Endothelial cell of umbilical vein (primary cell): ENCODE measurements at regions of chr19 and their contacts with region 1.

Region 1: DNA sequence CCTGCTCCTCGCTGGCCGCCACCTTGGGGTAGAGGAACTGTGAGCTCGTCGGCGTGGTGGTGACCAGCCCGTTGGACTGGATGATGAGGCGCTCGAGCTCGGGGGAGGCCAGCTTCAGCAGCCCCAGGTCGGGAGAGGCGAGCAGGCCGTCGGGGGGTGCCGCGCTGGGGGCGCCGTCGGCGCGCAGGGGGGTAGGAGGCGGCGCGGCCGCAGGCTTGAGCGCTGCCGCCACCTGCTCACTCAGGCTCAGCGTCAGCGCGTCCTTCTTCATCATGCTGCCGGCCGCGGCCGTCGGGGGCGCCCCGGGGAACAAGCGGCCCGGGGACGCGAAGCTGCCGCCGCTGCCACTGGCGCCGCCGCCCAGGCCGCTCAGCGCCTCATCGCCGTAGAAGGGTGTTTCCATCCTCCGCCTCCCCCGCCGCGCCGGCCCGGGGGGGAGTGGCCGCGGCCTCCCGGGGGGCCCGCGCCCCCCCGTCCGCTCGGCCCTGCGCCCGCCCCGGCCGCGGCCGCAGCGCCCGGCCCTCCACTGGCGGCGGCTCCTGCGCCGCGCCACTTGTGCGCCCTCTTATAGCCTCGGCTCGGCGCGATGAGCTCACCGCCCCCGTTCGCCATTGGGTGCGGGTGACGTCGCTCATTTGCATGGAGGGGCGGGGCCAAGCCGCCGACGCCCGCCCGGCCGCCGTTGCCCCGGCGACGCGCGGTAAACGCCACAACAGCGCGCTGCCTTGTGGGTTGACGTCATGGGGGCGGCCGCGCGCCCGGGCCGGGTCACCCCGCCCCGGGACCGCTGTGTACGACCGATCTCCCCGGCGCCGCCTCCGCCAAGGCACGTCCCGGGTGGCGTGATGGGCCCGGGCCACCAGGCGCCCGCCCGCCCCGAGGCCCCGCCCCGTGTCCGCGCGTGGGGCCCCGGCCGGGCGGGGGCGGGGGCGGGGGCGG is at the start of gene JUND:
- DNase-seq: peak; percentile 98
- H3K4me3 ChIP-seq: peak within 1 kb of the TSS; percentile 72 to 92 (median 80)
- H3K27ac ChIP-seq: peak within 1 kb of the TSS; percentile 94
- H3K4me1 ChIP-seq: peaks cover 19% of the 10 kb centered on the region
- H3K27me3 ChIP-seq: no peaks in the 10 kb centered on the region
- CTCF ChIP-seq: no peak
- POLR2A ChIP-seq: peak; percentile 98
- total RNA-seq, gene JUND: 130 and 137 TPM in 2 replicates

Region 2: GRCh38 chr19:17985037-17985818 is 296.1 kb before region 1 on chr19:
- CTCF ChIA-PET with region 1: no interaction called
- POLR2A ChIA-PET with region 1: no interaction called
- dilution Hi-C with region 1: no loop called
- intact Hi-C with region 1: no loop called
- DNase-seq: no peak
- H3K4me3 ChIP-seq: no peak overlapping the region
- H3K27ac ChIP-seq: no peak overlapping the region
- H3K4me1 ChIP-seq: no peaks in the 10 kb centered on the region
- H3K27me3 ChIP-seq: no peaks in the 10 kb centered on the region
- CTCF ChIP-seq: no peak
- POLR2A ChIP-seq: no peak

Region 3: GRCh38 chr19:18203863-18204393 is 77.4 kb before region 1 on chr19 and contains the start of gene RAB3A:
- CTCF ChIA-PET with region 1: interaction called, 13 read pairs
- POLR2A ChIA-PET with region 1: interaction called, 6 read pairs
- dilution Hi-C with region 1: no loop called
- intact Hi-C with region 1: no loop called
- DNase-seq: peak; percentile 100
- H3K4me3 ChIP-seq: peak within 1 kb of the TSS; percentile 46 to 81 (median 75)
- H3K27ac ChIP-seq: peak within 1 kb of the TSS; percentile 88
- H3K4me1 ChIP-seq: peaks cover 10% of the 10 kb centered on the region
- H3K27me3 ChIP-seq: peaks cover 0 to 2% of the 10 kb centered on the region in 2 experiments
- CTCF ChIP-seq: no peak
- POLR2A ChIP-seq: no peak
- total RNA-seq, gene RAB3A: 0.88 and 1.9 TPM in 2 replicates

Region 4: DNA sequence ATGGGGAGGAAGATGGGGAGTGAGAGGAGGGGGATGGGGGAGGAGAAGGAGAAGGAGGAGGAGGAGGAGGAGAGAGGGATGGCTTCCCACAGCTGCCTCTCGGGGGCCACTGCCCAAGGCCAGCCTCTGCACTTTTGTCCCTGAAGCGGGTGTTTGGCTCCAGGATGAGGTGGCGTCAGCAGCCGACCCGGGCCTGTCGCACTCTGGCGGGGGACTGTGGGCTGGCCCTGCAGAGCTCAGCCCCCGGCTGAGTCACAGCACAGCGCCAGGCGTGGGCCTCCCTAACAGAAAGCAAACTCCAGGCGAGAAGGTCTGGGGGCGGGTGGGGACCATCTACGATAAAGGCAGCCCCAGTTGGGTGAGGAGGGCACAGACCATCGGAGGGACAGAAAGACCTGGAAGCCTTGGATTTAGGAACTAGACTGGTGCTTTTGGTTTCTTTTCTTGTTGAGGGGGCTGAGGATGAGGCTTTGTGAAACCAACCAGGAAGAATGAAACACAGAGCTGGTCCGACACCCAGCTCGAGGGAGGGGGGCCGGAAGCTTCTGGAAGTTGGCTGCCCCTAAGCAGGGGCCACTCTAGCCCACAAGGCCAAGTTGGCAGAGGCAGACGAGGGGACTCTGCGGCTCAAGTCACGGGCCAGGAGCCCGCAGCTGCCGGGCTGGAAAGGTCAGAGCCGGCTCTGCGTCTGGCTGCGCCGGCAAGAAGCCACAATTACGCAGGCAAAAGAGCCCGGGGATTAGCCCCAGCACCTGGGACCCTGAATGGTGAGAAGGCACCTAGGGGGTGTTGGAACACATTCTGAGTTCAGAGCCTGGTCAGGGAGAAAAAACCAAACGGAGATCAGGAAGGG is 23.3 kb after region 1 on chr19:
- CTCF ChIA-PET with region 1: interaction called, 39 read pairs
- POLR2A ChIA-PET with region 1: interaction called, 73 read pairs
- dilution Hi-C with region 1: no loop called
- intact Hi-C with region 1: loop called (anchors 1 kb)
- DNase-seq: peak; percentile 83
- H3K4me3 ChIP-seq: peak overlapping the region in 2 of 3 experiments; percentile 8 to 35
- H3K27ac ChIP-seq: peak overlapping the region; percentile 98
- H3K4me1 ChIP-seq: peaks cover 21% of the 10 kb centered on the region
- H3K27me3 ChIP-seq: no peaks in the 10 kb centered on the region
- CTCF ChIP-seq: no peak
- POLR2A ChIP-seq: peak; percentile 69

Region 5: GRCh38 chr19:18328340-18329034 is 47.1 kb after region 1 on chr19:
- CTCF ChIA-PET with region 1: interaction called, 401 read pairs
- POLR2A ChIA-PET with region 1: interaction called, 113 read pairs
- dilution Hi-C with region 1: no loop called
- intact Hi-C with region 1: loop called (anchors 1 kb)
- DNase-seq: peak; percentile 97
- H3K4me3 ChIP-seq: peak overlapping the region in 2 of 3 experiments; percentile 4 to 16
- H3K27ac ChIP-seq: peak overlapping the region; percentile 13
- H3K4me1 ChIP-seq: peaks cover 8% of the 10 kb centered on the region
- H3K27me3 ChIP-seq: peaks cover 0 to 2% of the 10 kb centered on the region in 2 experiments
- CTCF ChIP-seq: peak; percentile 84 to 97
- POLR2A ChIP-seq: no peak

Region 6: DNA sequence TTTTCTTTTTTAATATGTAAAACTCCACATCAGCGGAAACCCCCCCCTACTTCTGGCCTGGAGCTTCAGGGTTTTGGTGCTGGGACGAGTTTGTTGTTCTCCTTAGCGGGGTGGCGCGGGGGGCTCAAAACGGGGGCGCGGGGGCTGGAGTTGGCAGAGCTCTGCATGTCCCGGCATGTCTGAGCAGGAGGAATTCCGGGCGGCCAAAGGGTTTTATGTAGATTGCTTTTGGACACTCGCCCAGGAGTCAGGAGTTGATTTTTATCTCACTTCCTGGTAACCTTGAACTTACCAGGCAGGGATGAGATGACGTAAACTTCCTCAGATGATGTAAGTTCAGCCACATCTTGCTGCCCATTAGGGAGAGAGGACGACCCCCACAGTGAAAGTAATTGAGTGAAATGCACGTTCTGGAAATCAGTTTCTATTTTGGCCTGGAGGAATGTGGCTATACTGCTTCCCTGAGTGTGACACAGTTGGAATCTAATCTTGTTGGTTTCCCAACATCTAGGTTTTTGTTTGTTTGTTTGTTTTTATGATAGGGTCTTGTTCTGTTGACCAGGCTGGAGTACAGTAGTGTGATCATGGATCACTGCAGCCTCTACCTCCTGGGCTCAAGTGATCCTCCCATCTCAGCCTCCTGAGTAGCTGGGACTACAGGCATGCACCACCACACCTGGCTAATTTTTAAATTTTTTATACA is 83.6 kb after region 1 on chr19:
- CTCF ChIA-PET with region 1: interaction called, 8 read pairs
- POLR2A ChIA-PET with region 1: interaction called, 15 read pairs
- dilution Hi-C with region 1: no loop called
- intact Hi-C with region 1: no loop called
- DNase-seq: peak; percentile 98
- H3K4me3 ChIP-seq: no peak overlapping the region
- H3K27ac ChIP-seq: peak overlapping the region; percentile 91
- H3K4me1 ChIP-seq: peaks cover 28% of the 10 kb centered on the region
- H3K27me3 ChIP-seq: no peaks in the 10 kb centered on the region
- CTCF ChIP-seq: no peak
- POLR2A ChIP-seq: peak; percentile 47

Region 7: DNA sequence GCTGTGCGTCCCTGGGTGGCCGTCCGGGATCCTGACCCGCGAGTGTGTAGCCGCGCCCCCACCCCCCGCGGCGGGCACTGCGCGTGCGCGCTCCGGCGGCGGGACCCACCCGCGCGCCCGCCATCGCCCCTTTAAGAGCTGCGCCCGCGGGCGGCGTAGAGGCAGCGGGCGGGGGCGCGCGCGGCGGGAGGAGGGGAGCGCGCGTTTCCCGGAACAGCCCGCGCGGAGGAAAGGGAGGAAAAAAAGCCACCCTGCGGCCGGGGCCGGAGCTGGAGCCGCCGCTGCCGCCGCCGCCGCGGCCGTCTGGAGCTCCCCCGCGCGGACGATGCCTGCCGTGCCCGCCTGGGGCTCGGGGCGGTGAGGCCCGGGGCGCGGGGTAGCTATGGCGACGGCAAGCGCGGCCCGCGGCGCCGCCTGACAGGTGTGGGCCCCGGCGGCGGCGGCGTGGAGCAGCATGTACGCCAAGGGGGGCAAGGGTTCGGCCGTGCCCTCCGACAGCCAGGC is 137.9 kb after region 1 on chr19 and contains the start of gene SSBP4:
- CTCF ChIA-PET with region 1: interaction called, 119 read pairs
- POLR2A ChIA-PET with region 1: interaction called, 58 read pairs
- dilution Hi-C with region 1: no loop called
- intact Hi-C with region 1: loop called (anchors 2 kb)
- DNase-seq: peak; percentile 76
- H3K4me3 ChIP-seq: peak within 1 kb of the TSS; percentile 50 to 73 (median 53)
- H3K27ac ChIP-seq: peak within 1 kb of the TSS; percentile 54
- H3K4me1 ChIP-seq: peaks cover 46% of the 10 kb centered on the region
- H3K27me3 ChIP-seq: no peaks in the 10 kb centered on the region
- CTCF ChIP-seq: peak; percentile 19 to 31
- POLR2A ChIP-seq: peak; percentile 49
- total RNA-seq, gene SSBP4: 140 and 151 TPM in 2 replicates

Region 8: GRCh38 chr19:18503971-18504885 is 222.9 kb after region 1 on chr19:
- CTCF ChIA-PET with region 1: no interaction called
- POLR2A ChIA-PET with region 1: no interaction called
- dilution Hi-C with region 1: no loop called
- intact Hi-C with region 1: no loop called
- DNase-seq: no peak
- H3K4me3 ChIP-seq: no peak overlapping the region
- H3K27ac ChIP-seq: no peak overlapping the region
- H3K4me1 ChIP-seq: peaks cover 17% of the 10 kb centered on the region
- H3K27me3 ChIP-seq: no peaks in the 10 kb centered on the region
- CTCF ChIP-seq: no peak
- POLR2A ChIP-seq: no peak